Right cardiac atrium (tissue), 5 donors: ENCODE measurements at regions of chr2 and their contacts with region 1.

Region 1: DNA sequence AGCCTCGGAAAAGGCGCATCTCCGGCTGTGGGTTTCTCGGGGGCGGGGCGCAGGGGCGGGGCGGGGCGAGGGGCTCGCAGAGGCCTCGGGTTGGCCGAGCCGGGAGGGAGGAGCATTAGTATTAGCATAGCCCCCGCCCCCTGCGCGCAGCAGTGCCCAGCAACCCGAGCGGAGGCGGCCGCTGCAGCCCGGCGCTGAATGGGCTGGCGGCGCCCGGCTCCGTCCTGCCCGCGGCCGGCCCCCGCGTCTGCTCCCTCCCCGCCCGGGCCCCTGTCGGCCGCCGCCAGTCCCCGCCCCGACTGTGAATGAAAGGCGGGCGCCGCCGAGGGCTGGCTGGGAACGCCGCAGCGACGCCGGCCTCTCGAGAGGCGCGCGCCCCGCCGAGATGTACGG is at the start of gene EFR3B:
- DNase-seq: peak; percentile 97 to 99 (median 98)
- ATAC-seq: peak; percentile 99
- H3K4me3 ChIP-seq: peak within 1 kb of the TSS; percentile 76
- H3K27ac ChIP-seq: peak within 1 kb of the TSS; percentile 77
- H3K4me1 ChIP-seq: peaks cover 3% of the 10 kb centered on the region
- H3K27me3 ChIP-seq: no peaks in the 10 kb centered on the region
- total RNA-seq, gene EFR3B: 4.8 to 9.7 (median 6.4) TPM

Region 2: DNA sequence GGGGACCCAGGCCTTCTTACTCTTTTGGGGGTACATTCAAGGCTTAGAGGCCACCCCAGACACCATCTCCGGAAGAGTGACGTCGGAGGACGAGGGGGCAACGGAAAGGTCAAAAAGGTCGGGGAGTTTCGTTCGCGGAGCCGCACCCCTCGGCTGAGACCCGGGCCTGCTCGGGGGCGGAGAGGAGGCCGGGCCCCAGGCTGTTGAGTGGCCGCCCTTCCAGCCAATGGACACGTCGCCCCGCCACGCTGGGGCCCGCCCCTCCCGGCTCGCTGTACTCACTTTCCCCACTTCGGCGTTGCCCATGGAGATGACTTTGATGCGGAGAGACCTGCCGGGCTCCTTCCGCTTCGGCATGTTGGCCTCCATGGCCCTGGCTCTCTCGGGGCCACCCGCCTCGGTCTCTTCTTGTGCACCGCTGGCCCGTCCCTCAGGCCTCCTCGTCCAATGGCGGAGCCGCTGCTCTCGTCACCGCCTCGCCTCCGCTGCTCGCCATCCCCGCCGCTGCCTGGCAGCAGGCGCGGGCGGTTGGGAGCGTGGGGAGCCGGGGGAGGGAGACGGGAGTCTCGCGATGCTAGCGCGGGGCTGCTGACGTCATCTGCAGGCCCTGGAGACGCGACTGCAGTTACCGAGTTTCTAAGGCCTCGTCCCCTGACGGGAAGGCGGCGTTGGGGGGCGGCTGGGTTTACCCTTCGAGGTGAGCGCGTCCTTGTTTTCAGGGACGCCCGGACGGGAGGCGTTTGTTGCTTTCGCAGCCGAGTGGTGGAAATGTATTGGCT is 70.2 kb before region 1 on chr2 and contains the start of gene DNAJC27:
- intact Hi-C with region 1: loop called in 1 of 4 experiments (anchors 5 kb)
- DNase-seq: peak; percentile 98 to 99 (median 99)
- ATAC-seq: peak; percentile 97
- H3K4me3 ChIP-seq: peak within 1 kb of the TSS; percentile 87
- H3K27ac ChIP-seq: peak within 1 kb of the TSS; percentile 97
- H3K4me1 ChIP-seq: no peaks in the 10 kb centered on the region
- H3K27me3 ChIP-seq: no peaks in the 10 kb centered on the region
- total RNA-seq, gene DNAJC27: 8.7 to 10.4 (median 9.5) TPM

Region 3: DNA sequence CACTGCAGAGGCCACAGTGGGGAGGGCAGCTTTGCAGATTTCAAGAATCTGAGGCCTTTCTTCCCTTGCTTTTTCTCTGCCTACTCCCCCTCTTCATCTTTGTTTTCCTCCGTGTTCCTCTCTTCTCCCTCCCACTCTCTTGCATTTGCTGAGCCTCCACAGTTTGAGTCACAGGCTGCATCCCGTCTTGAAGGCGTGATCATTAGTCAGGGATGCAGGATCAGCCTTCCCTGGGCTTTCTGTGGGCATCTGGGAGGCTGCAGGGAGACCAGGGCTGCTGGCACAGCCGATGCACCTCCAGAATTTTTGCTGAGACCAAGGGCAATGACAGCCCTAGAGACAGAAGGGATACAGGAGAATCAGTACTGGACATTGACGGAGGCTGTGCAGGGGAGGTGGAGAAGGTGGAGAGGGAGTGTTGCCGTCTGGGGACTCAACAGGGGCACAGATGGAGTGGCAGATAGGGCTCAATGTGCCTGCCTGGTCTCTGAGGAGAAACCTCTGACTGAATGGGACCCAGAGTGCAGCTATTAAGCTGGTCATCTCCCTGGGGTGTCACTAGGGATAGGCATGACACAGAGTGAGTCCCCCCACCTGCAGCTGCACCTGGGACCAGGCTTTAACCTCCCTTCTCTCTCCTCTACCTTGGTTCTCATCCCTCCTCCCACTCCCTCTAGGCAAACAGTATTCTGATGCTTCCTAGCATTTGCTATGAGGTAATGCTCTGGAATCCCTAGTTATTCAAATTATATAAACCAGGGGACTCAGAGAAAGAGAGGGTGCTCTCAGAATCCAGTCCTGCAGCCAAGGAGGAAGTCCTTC is 41.2 kb before region 1 on chr2:
- intact Hi-C with region 1: loop called in 1 of 4 experiments (anchors 5 kb)
- DNase-seq: no peak
- ATAC-seq: no peak
- H3K4me3 ChIP-seq: no peak overlapping the region
- H3K27ac ChIP-seq: no peak overlapping the region
- H3K4me1 ChIP-seq: no peaks in the 10 kb centered on the region
- H3K27me3 ChIP-seq: no peaks in the 10 kb centered on the region

Region 4: DNA sequence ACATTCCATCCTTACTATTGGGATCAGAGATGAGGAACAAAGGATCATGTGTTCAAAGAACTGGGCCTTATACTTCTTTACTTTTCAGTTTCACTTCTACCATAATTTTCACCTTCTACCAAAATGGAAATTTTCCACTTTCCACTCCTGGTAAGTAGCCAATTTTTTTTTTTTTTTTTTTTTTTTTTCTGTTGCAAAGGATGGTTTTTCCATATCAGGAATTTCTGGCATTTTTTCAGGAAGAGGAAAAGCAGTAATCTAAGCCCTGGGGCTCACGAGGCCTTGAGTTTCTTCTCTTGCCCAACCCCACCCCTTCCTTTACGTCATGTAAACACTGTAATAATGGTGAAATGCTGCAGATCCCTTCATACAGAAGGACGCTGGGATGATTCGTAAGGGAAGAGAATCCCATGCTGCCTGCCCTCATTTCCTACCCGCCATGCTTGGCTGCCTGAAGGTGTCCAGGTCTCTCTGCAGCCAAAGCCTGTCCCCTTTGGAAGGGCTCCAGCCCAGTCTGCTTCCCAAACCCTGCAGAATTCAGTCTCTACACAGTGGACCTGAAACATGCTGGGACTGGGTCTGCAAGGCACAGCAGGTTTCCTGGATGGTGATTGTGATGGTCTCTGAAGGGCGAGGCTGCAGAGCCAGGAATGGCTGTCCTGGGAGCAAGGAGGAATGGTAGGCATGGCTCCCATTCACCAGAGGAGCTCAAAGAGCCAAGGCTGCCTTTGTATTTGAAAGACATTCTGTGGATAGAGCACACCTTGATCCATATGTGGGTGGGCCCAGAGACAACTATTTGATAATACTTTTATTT is 57.0 kb after region 1 on chr2:
- intact Hi-C with region 1: loop called in 1 of 4 experiments (anchors 10 kb)
- DNase-seq: peak; percentile 50 to 72 (median 69)
- ATAC-seq: peak; percentile 95 to 97
- H3K4me3 ChIP-seq: no peak overlapping the region
- H3K27ac ChIP-seq: peak overlapping the region; percentile 87
- H3K4me1 ChIP-seq: peaks cover 6% of the 10 kb centered on the region
- H3K27me3 ChIP-seq: no peaks in the 10 kb centered on the region

Region 5: GRCh38 chr2:25184261-25184695 is 142.4 kb after region 1 on chr2:
- intact Hi-C with region 1: no loop called
- DNase-seq: no peak
- ATAC-seq: no peak
- H3K4me3 ChIP-seq: no peak overlapping the region
- H3K27ac ChIP-seq: no peak overlapping the region
- H3K4me1 ChIP-seq: no peaks in the 10 kb centered on the region
- H3K27me3 ChIP-seq: no peaks in the 10 kb centered on the region

Region 6: DNA sequence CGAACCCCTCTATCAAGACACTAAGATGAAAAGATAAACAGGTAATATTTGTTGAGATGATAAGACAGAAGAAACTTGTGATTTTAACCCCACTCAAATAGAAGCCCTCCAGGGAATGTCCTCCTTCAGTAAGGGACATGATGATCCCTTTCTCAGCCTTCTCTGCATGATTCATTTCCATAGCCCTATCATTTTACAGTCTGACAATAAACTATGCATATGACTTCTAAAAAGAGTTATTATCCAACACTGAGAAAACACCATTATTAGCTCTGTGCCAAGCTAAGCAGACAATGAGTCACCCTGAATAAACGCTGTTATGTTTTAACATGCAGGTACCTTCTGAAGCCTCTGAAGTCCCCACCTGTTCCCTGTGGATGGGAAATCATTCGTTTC is 576.7 kb after region 1 on chr2:
- intact Hi-C with region 1: no loop called
- DNase-seq: no peak
- ATAC-seq: peak; percentile 41 to 70
- H3K4me3 ChIP-seq: no peak overlapping the region
- H3K27ac ChIP-seq: no peak overlapping the region
- H3K4me1 ChIP-seq: no peaks in the 10 kb centered on the region
- H3K27me3 ChIP-seq: no peaks in the 10 kb centered on the region